HepG2 (cell line): ENCODE measurements at regions of chr1 and their contacts with region 1.

Region 1: GRCh38 chr1:196732526-196732925 is 42.1 kb upstream of the CFHR3 start:
- DNase-seq: peak; percentile 18
- ATAC-seq: peak; percentile 83
- H3K4me3 ChIP-seq: no peak overlapping the region
- H3K27ac ChIP-seq: no peak overlapping the region
- H3K4me1 ChIP-seq: no peaks in the 10 kb centered on the region
- H3K27me3 ChIP-seq: no peaks in the 10 kb centered on the region; a peak in 1 of 5 replicates
- CTCF ChIP-seq: no peak
- EP300 ChIP-seq: no peak
- POLR2A ChIP-seq: no peak
- RAD21 ChIP-seq: no peak

Region 2: GRCh38 chr1:196897158-196897828 is 164.8 kb after region 1 on chr1:
- CTCF ChIA-PET with region 1: no interaction called
- POLR2A ChIA-PET with region 1: no interaction called
- in situ Hi-C with region 1: no loop called
- intact Hi-C with region 1: no loop called
- DNase-seq: no peak
- ATAC-seq: peak; percentile 34; the same call in 1 of the 3 replicates
- H3K4me3 ChIP-seq: no peak overlapping the region
- H3K27ac ChIP-seq: no peak overlapping the region
- H3K4me1 ChIP-seq: no peaks in the 10 kb centered on the region
- H3K27me3 ChIP-seq: no peaks in the 10 kb centered on the region
- CTCF ChIP-seq: no peak
- EP300 ChIP-seq: no peak
- POLR2A ChIP-seq: no peak
- RAD21 ChIP-seq: no peak

Region 3: GRCh38 chr1:197062692-197063091 is 330.2 kb after region 1 on chr1:
- CTCF ChIA-PET with region 1: no interaction called
- POLR2A ChIA-PET with region 1: no interaction called
- in situ Hi-C with region 1: loop called (anchors 25 kb)
- intact Hi-C with region 1: no loop called
- DNase-seq: no peak
- ATAC-seq: no peak
- H3K4me3 ChIP-seq: no peak overlapping the region
- H3K27ac ChIP-seq: no peak overlapping the region
- H3K4me1 ChIP-seq: peaks cover 15% of the 10 kb centered on the region
- H3K27me3 ChIP-seq: no peaks in the 10 kb centered on the region
- CTCF ChIP-seq: no peak
- EP300 ChIP-seq: no peak
- POLR2A ChIP-seq: no peak
- RAD21 ChIP-seq: no peak

Region 4: GRCh38 chr1:197356723-197357533 is 624.4 kb after region 1 on chr1:
- CTCF ChIA-PET with region 1: no interaction called
- POLR2A ChIA-PET with region 1: no interaction called
- in situ Hi-C with region 1: loop called (anchors 25 kb)
- intact Hi-C with region 1: no loop called
- DNase-seq: peak; percentile 32
- ATAC-seq: peak; percentile 86
- H3K4me3 ChIP-seq: no peak overlapping the region
- H3K27ac ChIP-seq: no peak overlapping the region
- H3K4me1 ChIP-seq: no peaks in the 10 kb centered on the region
- H3K27me3 ChIP-seq: no peaks in the 10 kb centered on the region
- CTCF ChIP-seq: peak; percentile 76
- EP300 ChIP-seq: no peak
- POLR2A ChIP-seq: no peak
- RAD21 ChIP-seq: peak; percentile 40; the same call in 1 of the 2 replicates